Activated CD4-positive, alpha-beta T cell treated with anti-CD3 and anti-CD28 coated beads, Interleukin-2, amount 10 ng/mL, durations not matched to agents 24 days and 14 days (primary cell): ENCODE measurements at regions of chr5 and their contacts with region 1.

Region 1: GRCh38 chr5:178075840-178076548 is 37.3 kb upstream of the N4BP3 start:
- DNase-seq: peak; percentile 93
- H3K4me3 Mint-ChIP-seq: peak overlapping the region; percentile 75
- H3K27ac Mint-ChIP-seq: no peak overlapping the region
- H3K4me1 Mint-ChIP-seq: peaks cover 7% of the 10 kb centered on the region
- H3K27me3 Mint-ChIP-seq: peaks cover 6% of the 10 kb centered on the region

Region 2: DNA sequence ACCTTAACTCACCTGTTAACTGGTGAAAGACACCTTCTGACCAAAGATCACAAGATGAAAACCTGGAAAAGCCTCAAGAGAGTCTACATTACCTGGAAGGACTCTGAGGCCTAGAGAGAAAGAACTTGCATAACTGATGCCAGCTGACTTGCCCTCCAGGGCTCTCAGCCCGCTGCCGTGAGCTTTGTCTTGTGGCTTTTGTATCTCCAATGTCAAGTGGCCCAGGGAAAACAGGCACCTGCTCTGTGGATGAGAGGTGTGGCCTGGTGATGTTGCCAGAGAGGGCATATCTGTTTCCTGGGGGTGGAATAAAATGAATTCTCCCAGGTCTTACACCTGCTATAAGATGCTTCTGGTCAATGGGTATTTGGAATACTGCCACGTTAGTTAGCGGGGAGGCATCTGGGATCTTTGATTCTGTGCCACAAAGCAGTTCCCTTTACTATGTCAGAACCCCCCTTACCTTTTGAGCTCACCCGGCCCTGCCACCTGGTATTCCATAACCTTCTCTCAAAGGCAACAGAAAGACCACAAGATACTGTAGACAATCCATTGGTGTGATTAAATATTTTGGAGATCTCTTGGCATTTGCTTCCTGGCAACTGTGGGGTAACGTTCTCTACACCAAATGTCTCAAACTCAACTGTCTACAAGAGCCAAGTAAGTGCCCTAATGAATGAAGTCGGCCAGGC is 17.5 kb before region 1 on chr5:
- intact Hi-C with region 1: no loop called
- DNase-seq: no peak
- H3K4me3 Mint-ChIP-seq: no peak overlapping the region
- H3K27ac Mint-ChIP-seq: no peak overlapping the region
- H3K4me1 Mint-ChIP-seq: no peaks in the 10 kb centered on the region
- H3K27me3 Mint-ChIP-seq: peaks cover 2% of the 10 kb centered on the region

Region 3: GRCh38 chr5:178113199-178113787 is 37.3 kb after region 1 on chr5 and contains the start of gene N4BP3:
- intact Hi-C with region 1: loop called (anchors 5 kb)
- DNase-seq: peak; percentile 95
- H3K4me3 Mint-ChIP-seq: peak within 1 kb of the TSS; percentile 93
- H3K27ac Mint-ChIP-seq: peak within 1 kb of the TSS; percentile 89
- H3K4me1 Mint-ChIP-seq: peaks cover 33% of the 10 kb centered on the region
- H3K27me3 Mint-ChIP-seq: peaks cover 34% of the 10 kb centered on the region
- total RNA-seq, gene N4BP3: 3.2 and 3.3 TPM in 2 replicates

Region 4: DNA sequence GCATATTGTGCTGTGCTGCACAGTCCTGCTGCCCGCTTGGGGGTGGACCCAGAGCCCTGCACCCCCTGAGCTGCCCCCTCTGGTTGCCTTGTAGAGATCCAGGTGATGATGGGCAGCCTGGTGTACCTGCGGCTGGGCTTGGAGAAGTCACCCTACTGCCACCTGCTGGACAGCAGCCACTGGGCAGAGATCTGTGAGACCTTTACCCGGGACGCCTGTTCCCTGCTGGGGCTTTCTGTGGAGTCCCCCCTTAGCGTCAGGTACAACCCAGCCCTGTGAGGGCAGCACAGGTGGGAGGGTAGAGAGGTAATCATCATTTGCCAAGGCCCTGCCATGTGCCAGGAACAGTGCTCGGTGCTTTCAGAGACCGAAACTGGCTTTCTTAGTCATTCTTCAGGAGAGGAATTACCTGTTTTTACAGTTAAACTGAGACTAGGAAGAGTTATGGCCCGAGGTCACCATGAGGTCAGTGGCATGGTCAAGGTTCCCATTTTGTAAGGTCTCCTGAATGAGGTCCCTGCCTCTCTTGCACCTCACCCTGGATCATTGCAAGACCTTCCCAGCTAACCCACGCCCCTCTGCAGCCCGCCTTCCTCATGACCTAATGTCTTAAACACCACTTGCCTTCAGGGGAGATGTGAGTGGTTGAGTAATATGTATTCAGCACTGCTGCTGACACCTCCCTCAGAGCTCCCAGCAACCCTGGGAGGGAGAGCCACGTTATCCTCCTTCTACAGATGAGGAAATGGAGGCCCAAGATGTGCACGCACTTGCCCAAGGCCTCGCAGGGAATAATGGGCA is 70.2 kb after region 1 on chr5:
- intact Hi-C with region 1: loop called (anchors 1 kb)
- DNase-seq: peak; percentile 91
- H3K4me3 Mint-ChIP-seq: no peak overlapping the region
- H3K27ac Mint-ChIP-seq: peak overlapping the region; percentile 35
- H3K4me1 Mint-ChIP-seq: peaks cover 31% of the 10 kb centered on the region
- H3K27me3 Mint-ChIP-seq: no peaks in the 10 kb centered on the region

Region 5: DNA sequence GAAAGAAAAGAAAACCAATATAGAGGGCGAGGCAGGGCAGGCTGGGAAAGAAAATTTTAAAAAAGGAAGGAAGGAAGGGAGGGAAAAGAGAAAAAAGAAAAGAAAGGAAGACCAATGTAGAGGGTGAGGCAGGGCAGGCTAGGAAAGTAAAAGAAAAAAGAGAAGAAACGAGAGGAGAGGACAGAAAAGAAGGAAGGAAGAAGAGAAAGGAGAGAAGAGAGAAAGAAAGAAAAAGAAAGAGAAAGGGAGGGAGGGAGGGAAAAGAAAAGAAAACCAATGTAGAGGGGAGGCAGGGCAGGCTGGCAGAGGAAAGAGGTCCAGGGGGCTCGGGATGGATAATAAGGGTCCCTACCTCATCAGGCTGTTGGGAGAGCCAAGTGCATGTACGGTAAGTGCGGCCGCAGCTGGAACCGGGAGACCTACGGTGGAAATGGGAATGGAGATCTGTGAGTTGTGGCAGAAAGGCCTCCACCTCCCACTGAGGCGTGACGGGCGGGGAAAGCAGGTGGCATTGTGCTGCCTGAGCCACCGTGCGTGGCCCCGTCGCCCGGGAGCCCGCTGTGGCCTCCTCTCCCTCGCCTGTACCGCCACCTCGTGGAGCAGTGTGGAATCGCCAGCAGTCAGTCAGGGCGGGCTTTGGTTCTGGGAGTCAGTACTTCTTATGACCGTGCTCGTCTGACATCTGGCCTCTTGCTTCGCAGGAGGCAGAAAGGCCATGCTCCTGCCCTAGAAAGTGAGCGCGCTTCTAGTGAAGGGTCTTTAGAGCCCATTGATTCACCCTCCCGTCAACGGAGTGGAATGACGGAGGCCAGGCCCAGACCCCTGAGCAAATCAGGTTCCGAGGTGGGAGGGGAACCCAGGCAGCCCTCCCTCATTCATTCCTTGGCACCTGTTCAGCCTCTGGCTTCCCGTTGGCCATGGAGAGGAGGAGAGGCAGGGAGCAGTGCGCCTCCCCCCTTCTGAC is 88.1 kb after region 1 on chr5:
- intact Hi-C with region 1: loop called (anchors 1 kb)
- DNase-seq: peak; percentile 98
- H3K4me3 Mint-ChIP-seq: peak overlapping the region; percentile 54
- H3K27ac Mint-ChIP-seq: no peak overlapping the region
- H3K4me1 Mint-ChIP-seq: peaks cover 5% of the 10 kb centered on the region
- H3K27me3 Mint-ChIP-seq: peaks cover 22% of the 10 kb centered on the region

Region 6: GRCh38 chr5:178284095-178284675 is 208.2 kb after region 1 on chr5:
- intact Hi-C with region 1: no loop called
- DNase-seq: no peak
- H3K4me3 Mint-ChIP-seq: no peak overlapping the region
- H3K27ac Mint-ChIP-seq: no peak overlapping the region
- H3K4me1 Mint-ChIP-seq: peaks cover 4% of the 10 kb centered on the region
- H3K27me3 Mint-ChIP-seq: no peaks in the 10 kb centered on the region

Region 7: GRCh38 chr5:178590924-178591423 is 515.0 kb after region 1 on chr5:
- intact Hi-C with region 1: no loop called
- DNase-seq: no peak
- H3K4me3 Mint-ChIP-seq: peak overlapping the region; percentile 73
- H3K27ac Mint-ChIP-seq: no peak overlapping the region
- H3K4me1 Mint-ChIP-seq: peaks cover 3% of the 10 kb centered on the region
- H3K27me3 Mint-ChIP-seq: peaks cover 47% of the 10 kb centered on the region